HAP-1 (cell line): ENCODE measurements at regions of chr5 and their contacts with region 1.

Region 1: GRCh38 chr5:111158105-111158744 is 66.0 kb upstream of the CAMK4 start:
- DNase-seq: peak; percentile 58 to 86
- H3K4me3 ChIP-seq: no peak overlapping the region
- H3K4me1 ChIP-seq: no peaks in the 10 kb centered on the region
- H3K27me3 ChIP-seq: no peaks in the 10 kb centered on the region

Region 2: GRCh38 chr5:111266491-111266890 is 108.3 kb after region 1 on chr5:
- in situ Hi-C with region 1: loop called (anchors 10 kb)
- DNase-seq: no peak
- H3K4me3 ChIP-seq: no peak overlapping the region
- H3K4me1 ChIP-seq: no peaks in the 10 kb centered on the region
- H3K27me3 ChIP-seq: no peaks in the 10 kb centered on the region

Region 3: DNA sequence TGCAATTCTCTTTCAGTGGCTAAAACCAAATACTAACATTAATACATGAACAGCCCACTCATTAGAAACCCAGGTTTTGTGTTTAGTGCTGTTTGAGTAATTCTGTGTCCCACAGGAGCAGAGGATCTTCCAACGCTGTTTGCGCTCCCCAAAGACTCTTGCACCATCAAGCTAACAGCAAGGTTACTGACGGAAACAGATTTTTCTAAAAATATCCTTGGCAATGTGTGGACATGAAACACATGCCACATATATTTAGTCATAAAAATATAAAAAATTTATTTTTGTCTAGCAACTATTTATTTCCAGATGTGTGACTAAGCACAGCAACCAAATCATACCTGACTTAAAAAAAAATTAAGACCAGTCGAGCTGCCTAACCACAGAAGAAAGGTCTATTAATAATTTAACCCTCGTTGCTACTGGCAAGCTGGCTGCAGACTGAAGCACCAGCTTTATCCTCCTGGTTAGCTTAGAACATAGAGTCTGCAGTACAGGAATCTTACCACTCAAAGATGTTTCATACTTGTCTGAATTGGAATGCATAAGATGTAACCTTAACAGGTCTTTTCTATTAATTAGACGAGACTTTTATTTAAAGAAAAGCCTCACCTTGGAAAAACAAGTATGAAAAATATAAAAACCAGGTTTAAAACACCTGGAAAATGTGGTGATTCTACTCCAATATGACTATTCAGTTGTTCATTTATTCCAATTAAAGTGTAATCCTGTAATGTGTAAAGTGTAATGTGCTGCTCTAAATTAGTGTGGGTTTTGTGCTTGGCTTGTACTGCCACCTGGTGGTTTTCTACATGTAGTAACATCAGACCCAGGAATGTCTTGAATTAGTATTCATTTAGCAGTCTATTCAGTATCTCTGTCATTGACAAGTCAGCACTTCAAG is 988.4 kb after region 1 on chr5:
- in situ Hi-C with region 1: loop called (anchors 25 kb)
- DNase-seq: peak; percentile 69
- H3K4me3 ChIP-seq: no peak overlapping the region
- H3K4me1 ChIP-seq: peaks cover 9% of the 10 kb centered on the region
- H3K27me3 ChIP-seq: no peaks in the 10 kb centered on the region